ENCODE measurements at regions of chr3 and their contacts with region 1.

Region 1: DNA sequence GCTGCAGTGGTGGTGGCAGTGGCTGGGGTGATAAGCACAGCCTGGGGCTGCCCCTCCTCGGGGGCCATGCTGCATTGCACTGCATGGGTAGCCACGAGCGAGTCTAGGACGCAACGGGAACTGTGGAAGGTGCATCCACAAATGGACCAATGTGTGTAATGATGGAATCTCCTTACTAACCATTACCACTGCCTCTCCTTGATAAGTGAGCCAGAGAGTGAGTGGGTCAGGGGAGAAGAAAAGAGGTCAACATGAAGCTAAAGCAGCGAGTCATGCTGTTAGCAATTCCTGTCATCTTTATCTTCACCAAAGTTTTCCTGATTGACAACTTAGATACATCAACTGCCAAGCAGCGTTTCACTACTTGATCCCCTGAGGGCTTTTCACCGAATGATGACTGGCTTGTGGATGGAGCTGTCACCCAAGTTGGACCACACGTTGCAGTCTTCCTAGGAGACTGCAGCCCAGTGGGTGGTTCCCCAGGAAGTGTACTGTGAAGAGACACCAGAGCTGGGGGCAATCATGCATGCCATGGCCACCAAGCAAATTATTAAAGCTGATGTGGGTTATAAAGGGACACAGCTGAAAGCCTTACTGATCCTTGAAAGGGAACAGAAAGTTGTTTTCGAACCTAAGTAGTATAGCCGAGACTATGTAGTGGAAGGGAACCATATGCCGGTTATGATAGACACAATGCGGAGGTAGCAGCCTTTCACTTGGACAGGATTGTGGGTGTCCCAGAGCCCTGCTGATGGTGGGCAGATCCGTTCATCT is 20.6 kb downstream of the SAMD7 start:
- DNase-seq: no peak

Region 2: DNA sequence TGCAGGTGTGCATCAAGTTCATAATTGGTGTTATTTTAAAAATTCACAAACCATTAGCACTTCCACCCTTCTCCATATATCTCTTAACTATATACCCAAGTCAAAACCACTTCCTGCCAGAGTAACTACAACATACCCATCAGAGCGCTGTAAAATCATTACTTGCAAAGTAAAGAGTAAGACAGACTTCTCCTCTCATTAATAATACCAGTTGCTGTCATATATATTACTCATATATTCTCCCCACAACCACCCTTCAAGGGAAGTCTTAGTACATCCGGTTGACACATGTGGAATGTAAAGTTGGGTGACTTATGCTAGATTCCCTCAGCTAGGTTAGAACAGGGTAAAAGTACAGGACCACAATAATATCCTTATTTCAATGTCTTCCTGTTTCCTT is 172.7 kb before region 1 on chr3:
- intact Hi-C with region 1: no loop called
- DNase-seq: no peak

Region 3: GRCh38 chr3:169879845-169880575 is 51.9 kb before region 1 on chr3:
- intact Hi-C with region 1: loop called in 1 of 2 experiments (anchors 2 kb)
- DNase-seq: no peak

Region 4: GRCh38 chr3:170078620-170079281 is 146.8 kb after region 1 on chr3:
- intact Hi-C with region 1: no loop called
- DNase-seq: no peak